Esophagus muscularis mucosa (tissue), 4 donors: ENCODE measurements at regions of chr18 and their contacts with region 1.

Region 1: DNA sequence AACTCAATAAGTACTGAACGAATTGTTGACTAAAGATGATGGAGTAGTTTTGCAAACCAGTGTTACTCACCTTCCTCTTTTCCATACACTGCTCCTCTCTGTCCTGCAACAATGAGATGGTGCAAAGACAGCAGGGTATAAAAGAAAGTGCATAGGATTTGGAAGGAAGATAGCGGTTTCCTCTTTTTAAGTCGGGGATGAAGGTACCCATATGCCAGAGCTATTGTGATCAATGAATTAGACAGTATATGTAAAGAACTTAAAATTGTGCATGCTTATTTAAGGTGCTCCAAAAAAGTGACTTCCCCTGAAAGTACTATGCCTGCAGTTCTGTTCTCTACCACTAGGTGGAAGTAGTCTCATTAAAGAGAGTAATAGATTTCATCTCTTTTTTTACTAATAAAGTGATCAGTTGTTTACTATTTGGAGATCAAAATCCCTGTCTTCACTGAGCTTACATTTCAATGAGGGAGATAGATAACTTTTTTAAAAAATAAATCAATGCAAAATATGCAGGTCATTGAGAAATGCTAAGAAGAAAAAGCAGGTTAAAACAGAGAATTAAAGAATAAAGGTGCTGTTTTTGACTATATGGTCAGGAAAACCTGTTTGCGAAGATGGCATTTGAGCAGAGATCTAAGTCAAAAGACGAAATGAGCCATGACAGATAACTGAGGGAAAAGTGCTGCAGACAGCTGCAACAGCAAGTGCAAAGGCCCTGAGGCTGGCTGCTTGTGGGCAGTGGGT is 339.7 kb upstream of the SLC14A2 start:
- DNase-seq: no peak
- H3K4me3 ChIP-seq: no peak overlapping the region
- H3K27ac ChIP-seq: no peak overlapping the region
- H3K4me1 ChIP-seq: no peaks in the 10 kb centered on the region
- H3K27me3 ChIP-seq: no peaks in the 10 kb centered on the region
- CTCF ChIP-seq: peak; percentile 44 to 69 (median 49)
- EP300 ChIP-seq: no peak
- POLR2A ChIP-seq: no peak

Region 2: DNA sequence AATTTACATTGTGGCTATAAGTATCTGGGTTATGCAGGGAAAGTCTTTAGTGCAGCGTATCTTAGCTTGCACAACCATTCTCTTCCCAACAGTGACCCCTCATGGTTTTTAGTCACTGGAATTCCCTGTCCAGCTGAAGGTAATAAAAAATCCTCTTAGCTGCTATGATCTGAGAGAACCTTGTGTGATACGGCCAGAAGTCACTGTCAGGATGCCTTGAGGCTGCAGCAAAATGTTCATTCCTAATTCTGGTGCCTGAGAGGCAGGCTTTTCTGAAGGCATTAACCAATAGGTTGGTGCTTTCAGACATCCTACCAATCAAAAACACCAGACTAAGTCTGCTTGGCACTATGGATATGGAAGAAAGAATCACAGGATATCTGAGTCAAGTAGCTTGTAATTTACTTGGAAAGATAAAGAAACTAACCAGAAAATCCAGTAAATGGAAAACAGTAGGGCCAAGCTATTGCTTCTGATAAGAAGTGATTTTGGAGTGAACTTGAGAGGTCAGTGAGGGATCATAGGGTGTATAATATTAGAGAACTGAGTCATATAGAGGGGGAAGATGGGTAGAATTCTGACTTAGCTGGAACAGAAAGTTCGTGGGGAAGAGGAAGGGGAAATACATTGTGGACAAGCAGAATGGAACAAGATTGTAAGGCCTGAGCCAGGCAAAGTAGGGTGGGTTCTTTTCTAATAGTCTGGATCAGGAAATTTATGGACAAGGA is 250.7 kb after region 1 on chr18:
- intact Hi-C with region 1: loop called (anchors 10 kb)
- DNase-seq: no peak
- H3K4me3 ChIP-seq: no peak overlapping the region
- H3K27ac ChIP-seq: peak overlapping the region in 2 of 4 donors; percentile 4 to 6
- H3K4me1 ChIP-seq: peaks cover 5 to 34% (median 31%) of the 10 kb centered on the region in 4 donors
- H3K27me3 ChIP-seq: no peaks in the 10 kb centered on the region
- CTCF ChIP-seq: peak; percentile 28 to 34 (median 30)
- EP300 ChIP-seq: no peak
- POLR2A ChIP-seq: no peak